Left cardiac atrium (tissue), 4 donors: ENCODE measurements at regions of chr10 and their contacts with region 1.

Region 1: GRCh38 chr10:80924063-80924952 is 386.6 kb downstream of the SH2D4B start:
- DNase-seq: peak; percentile 34
- ATAC-seq: peak; percentile 53 to 67

Region 2: GRCh38 chr10:80382989-80383388 is 541.3 kb before region 1 on chr10:
- intact Hi-C with region 1: loop called in 1 of 2 experiments (anchors 10 kb)
- DNase-seq: peak; percentile 36
- ATAC-seq: peak in 1 of 2 donors; percentile 59

Region 3: GRCh38 chr10:80662577-80663261 is 261.6 kb before region 1 on chr10:
- intact Hi-C with region 1: loop called in 1 of 2 experiments (anchors 2 kb)
- DNase-seq: peak; percentile 83
- ATAC-seq: peak; percentile 82 to 89

Region 4: DNA sequence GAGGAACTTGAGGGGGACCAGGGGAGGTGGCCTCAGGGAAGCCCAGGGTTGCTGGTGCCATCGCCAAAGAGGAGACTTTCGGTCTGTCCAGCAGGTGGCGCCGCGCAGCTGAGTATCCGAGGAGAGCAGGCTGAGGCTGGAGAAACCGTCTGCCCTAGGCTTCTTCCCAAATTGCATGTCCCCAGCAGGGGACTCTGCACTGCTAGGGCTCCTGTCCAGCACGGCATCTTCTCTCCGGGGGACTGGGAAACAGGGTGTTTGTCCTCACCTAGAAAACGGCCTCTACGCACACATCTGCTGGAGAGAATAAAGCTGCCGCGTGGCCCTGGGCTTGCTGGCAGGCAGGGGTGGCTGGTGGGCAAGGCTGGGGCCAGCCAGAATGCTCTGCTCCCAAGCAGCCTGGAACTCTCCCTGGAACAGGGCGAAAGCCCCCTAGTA is 224.7 kb before region 1 on chr10:
- intact Hi-C with region 1: loop called in 1 of 2 experiments (anchors 10 kb)
- DNase-seq: peak; percentile 82
- ATAC-seq: peak; percentile 84 to 94

Region 5: DNA sequence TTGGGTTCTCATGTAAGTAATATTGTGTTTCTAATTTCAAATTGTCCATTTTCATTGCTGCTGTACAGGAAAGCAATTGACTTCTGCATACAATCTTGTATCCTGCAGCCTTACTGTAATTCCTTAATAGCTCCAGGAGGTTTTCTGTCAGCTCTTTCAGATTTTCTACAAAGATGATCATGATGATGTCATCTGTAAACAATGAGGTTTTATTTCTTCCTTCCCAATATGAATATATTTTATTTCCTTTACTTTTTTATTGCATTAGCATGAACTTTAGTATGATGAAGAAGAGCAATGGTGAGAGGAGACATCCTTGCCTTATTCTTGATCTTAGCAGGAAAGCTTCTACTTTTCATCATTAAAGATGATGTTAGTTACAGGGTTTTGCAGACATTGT is 469.6 kb after region 1 on chr10:
- intact Hi-C with region 1: no loop called
- DNase-seq: no peak
- ATAC-seq: no peak